ENCODE measurements at regions of chr9 and their contacts with region 1.

Region 1: GRCh38 chr9:5437254-5438216 is at the start of gene PLGRKT:
- DNase-seq: peak; percentile 89
- H3K4me3 Mint-ChIP-seq: peak within 1 kb of the TSS; percentile 91
- H3K27ac Mint-ChIP-seq: peak within 1 kb of the TSS; percentile 96
- H3K4me1 Mint-ChIP-seq: peaks cover 54% of the 10 kb centered on the region
- H3K27me3 Mint-ChIP-seq: no peaks in the 10 kb centered on the region
- total RNA-seq, gene PLGRKT: 39.3 and 42.3 TPM in 2 replicates

Region 2: GRCh38 chr9:4740638-4741364 is 696.7 kb before region 1 on chr9 and contains the start of gene AK3:
- intact Hi-C with region 1: loop called (anchors 5 kb)
- DNase-seq: peak; percentile 85
- H3K4me3 Mint-ChIP-seq: peak within 1 kb of the TSS; percentile 90
- H3K27ac Mint-ChIP-seq: peak within 1 kb of the TSS; percentile 89
- H3K4me1 Mint-ChIP-seq: peaks cover 29% of the 10 kb centered on the region
- H3K27me3 Mint-ChIP-seq: no peaks in the 10 kb centered on the region
- total RNA-seq, gene AK3: 33.9 and 34.5 TPM in 2 replicates

Region 3: DNA sequence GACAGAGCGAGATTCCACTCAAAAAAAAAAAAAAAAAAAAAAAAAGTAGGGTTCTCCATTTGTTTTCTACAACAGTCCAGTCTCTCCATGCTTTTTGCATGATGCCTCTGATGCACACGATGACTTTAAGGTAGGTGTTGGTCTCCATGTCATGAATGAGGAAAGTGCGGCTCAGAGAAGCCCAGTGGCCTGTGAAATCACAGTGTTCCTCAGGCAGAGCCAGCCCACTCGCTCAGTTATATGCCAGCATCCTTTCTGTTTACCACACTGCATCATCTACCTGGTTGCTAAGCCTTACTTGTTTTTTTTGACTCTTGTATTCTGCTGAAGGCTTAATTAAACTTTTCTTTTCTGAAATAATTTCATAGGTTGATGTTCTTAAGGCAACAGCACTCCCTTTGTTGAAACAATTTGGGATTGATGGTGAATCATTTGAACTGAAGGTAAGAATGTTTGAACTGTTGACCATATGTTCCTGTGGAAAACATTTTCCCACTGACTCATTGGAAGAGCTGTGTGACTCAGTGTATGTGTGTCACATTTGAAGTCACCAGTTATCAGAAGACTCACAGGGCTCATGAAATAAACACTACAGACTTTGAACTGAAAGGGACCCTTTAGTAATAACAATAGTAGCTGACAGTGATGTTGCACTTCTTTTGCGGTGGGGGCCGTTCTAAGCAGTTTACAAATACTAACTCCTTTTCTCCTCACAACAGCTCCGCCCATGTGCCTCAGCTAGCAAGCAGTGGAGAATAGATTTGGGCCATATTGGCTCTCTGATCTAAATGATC is 604.6 kb before region 1 on chr9:
- intact Hi-C with region 1: loop called (anchors 5 kb)
- DNase-seq: peak; percentile 27
- H3K4me3 Mint-ChIP-seq: no peak overlapping the region
- H3K27ac Mint-ChIP-seq: peak overlapping the region; percentile 93
- H3K4me1 Mint-ChIP-seq: peaks cover 47% of the 10 kb centered on the region
- H3K27me3 Mint-ChIP-seq: no peaks in the 10 kb centered on the region

Region 4: DNA sequence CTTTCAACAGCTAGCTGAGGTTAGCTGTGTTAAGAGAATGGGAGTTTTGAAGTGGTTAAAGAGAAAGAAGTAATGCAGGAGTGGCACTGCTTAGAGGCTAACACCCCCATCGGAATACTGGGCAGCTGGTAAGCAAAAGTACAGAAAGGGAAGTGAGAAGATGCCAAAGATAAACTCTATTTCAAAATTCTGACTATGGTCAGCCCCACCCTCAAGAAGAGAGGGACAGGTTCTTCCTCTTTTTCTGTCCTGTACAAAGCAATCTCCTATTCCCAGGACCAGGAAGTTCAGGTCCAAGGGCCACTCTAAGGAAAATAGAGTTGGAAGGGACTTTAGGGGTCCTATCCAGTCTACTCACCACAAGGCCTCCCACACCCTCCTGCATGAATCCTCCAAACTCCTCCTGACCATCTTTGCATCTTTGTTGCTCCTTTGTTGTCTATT is 498.4 kb before region 1 on chr9:
- intact Hi-C with region 1: loop called (anchors 5 kb)
- DNase-seq: peak; percentile 39
- H3K4me3 Mint-ChIP-seq: peak overlapping the region; percentile 14
- H3K27ac Mint-ChIP-seq: peak overlapping the region; percentile 90
- H3K4me1 Mint-ChIP-seq: peaks cover 65% of the 10 kb centered on the region
- H3K27me3 Mint-ChIP-seq: no peaks in the 10 kb centered on the region

Region 5: DNA sequence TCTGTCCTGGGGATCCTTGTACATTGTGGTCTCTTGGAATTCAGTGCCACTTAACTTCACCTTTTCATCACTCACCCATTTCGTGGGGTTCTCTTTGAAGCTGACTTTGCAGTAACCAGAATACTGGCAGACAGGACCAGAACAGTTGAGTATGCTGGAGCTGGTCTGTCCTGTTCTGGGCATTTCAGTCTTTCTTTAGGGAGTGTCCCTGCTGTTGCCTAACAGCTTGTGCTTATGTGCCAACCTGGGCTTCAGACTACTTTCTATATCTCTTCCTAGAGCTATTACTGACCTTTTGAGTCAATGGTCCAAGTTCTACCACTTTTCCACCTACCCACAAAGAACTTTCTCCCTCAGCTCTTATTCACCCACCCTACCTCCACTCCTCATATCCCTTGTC is 242.1 kb before region 1 on chr9:
- intact Hi-C with region 1: no loop called
- DNase-seq: no peak
- H3K4me3 Mint-ChIP-seq: no peak overlapping the region
- H3K27ac Mint-ChIP-seq: no peak overlapping the region
- H3K4me1 Mint-ChIP-seq: no peaks in the 10 kb centered on the region
- H3K27me3 Mint-ChIP-seq: peaks cover 41% of the 10 kb centered on the region

Region 6: DNA sequence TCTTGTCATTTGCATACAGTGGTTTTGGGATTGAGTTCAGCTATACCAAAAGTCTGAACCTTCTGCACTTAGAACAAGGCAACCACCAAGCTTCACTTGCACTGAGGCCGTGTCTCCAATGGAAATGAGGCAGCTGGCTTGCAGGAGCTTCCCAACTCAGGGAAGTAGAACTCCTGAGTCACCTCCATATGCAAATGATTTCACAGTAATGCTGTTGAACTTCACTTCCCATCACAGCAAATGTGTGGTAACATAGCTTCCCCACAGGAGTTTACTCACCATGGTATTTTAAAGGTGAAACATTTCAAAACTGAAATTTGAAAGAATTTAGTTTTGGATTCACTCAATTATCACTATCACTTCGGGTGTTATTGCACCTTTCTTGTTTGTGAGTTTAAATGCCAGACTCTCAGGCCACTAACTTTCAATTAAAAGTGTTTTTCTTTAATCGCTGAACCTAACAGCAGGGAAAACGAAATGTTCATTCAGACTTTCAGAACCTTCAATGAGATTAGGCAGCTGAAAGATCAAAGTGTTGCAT is 21.8 kb after region 1 on chr9:
- intact Hi-C with region 1: loop called (anchors 1 kb)
- DNase-seq: no peak
- H3K4me3 Mint-ChIP-seq: peak overlapping the region; percentile 51
- H3K27ac Mint-ChIP-seq: peak overlapping the region; percentile 74
- H3K4me1 Mint-ChIP-seq: peaks cover 63% of the 10 kb centered on the region
- H3K27me3 Mint-ChIP-seq: no peaks in the 10 kb centered on the region

Region 7: DNA sequence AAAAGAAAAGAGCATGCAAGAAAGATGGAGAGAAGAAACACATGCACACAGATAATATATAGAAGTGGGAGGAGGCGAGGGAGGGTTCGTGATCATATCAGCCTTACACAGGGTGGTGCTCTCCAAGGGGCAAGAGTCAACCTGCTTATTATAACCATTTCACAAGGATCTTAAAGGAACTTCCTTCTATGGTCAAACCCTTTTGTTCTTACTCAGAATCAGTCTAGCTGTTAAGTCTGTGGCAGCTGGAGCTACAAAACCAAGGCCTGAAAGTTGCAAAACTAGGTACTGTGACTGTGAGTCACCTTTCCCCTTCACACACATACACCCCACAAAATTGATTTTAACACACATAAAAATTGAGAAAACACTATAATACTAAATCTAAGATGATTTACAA is 413.9 kb after region 1 on chr9:
- intact Hi-C with region 1: loop called (anchors 5 kb)
- DNase-seq: peak; percentile 48
- H3K4me3 Mint-ChIP-seq: peak overlapping the region; percentile 15
- H3K27ac Mint-ChIP-seq: peak overlapping the region; percentile 75
- H3K4me1 Mint-ChIP-seq: peaks cover 67% of the 10 kb centered on the region
- H3K27me3 Mint-ChIP-seq: no peaks in the 10 kb centered on the region

Measured in activated T-helper 2 cell treated with anti-CD3 and anti-CD28 coated beads, Interferon-gamma antibody, Interleukin-2, Interleukin-4, amounts not matched to agents 10 μg/mL and 5 μg/mL and 100 μg/mL, durations not matched to agents 14 hours and 24 hours and 36 hours (primary cell).